PC-9 (cell line): ENCODE measurements at regions of chr6 and their contacts with region 1.

Region 1: DNA sequence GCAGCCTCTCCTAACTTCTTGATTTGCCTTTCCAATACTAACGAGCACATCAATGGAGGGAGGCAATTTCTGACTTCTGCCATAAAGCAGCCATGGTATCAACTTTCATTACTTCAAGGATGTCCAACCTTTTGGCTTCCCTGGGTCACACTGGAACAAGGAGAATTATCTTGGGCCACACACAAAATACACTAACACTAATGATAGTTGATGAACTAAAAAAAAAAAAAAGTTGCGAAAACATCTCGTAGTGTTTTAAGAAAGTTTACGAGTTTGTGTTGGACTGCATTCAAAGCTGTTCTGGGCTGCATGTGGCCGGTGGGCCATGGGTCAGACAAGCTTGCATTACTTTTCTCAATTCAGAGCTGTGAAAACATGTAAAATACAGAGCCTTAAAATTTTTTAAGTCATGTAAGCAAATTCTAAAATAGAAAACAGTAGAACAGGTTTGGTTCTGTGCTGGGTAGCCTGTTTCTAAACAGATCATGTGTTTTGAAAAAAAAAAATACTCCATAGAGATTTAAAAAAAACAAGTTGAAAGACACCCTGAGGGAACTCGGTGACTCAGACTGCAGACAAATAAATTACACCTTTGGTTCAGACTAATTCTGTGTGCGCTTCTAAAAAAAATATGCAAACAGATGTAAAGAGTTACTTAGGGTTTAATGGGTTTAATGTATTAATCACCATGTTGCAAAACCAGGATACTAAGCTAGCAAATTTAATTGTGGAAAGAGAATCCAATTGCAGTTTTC is 43.6 kb upstream of the SLC22A23 start:
- DNase-seq: peak; percentile 21 to 93
- H3K4me3 ChIP-seq: peak overlapping the region; percentile 41
- H3K27ac ChIP-seq: peak overlapping the region; percentile 43; the same call in 1 of the 2 replicates
- H3K4me1 ChIP-seq: peaks cover 25% of the 10 kb centered on the region
- H3K27me3 ChIP-seq: no peaks in the 10 kb centered on the region
- CTCF ChIP-seq: no peak

Region 2: DNA sequence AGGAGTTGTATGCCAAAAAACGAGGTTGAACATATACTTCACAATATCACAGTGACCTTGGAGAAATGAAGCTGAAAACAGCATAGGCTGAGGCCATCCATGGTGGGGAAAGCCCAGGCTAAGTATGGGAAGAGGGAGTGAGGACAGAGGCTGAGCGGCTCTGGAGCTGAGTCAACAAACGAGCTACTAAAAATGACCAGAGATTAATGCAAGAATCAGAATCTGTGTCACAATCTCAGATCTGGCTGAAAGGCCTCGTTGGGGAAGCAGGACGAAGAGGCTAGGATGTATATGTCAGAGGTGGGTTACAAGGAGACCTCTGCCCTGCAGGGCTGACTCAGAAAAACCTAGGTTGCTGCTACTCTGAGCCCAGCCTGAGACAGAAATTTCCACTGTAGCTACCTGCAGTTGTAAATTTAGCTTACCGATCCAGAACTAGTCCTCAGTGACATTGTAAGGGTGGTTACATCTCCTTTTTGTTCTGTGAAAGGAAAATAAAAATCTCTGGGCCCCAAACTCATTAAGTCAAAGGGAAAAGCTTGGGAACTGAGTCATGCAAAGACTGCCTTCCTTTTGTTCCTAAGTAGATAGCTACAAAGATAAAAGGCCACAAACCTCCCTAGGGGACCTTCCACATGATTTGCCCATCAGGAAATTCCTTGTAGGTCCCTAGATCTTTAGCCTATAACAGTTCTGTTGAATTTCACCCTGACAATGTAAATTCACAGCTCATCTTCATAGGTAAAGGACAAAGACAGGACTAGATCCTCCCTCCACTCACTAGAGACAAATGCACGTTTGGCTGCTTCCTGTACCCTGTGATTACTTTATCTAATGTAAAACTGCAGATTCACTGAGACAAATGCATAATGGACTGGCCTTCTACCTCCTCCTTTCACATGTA is 334.6 kb before region 1 on chr6:
- CTCF ChIA-PET with region 1: no interaction called
- POLR2A ChIA-PET with region 1: no interaction called
- intact Hi-C with region 1: no loop called
- DNase-seq: peak in 1 of 2 experiments; percentile 85
- H3K4me3 ChIP-seq: peak overlapping the region; percentile 8; the same call in 1 of the 2 replicates
- H3K27ac ChIP-seq: peak overlapping the region; percentile 88
- H3K4me1 ChIP-seq: peaks cover 45% of the 10 kb centered on the region
- H3K27me3 ChIP-seq: no peaks in the 10 kb centered on the region
- CTCF ChIP-seq: no peak

Region 3: DNA sequence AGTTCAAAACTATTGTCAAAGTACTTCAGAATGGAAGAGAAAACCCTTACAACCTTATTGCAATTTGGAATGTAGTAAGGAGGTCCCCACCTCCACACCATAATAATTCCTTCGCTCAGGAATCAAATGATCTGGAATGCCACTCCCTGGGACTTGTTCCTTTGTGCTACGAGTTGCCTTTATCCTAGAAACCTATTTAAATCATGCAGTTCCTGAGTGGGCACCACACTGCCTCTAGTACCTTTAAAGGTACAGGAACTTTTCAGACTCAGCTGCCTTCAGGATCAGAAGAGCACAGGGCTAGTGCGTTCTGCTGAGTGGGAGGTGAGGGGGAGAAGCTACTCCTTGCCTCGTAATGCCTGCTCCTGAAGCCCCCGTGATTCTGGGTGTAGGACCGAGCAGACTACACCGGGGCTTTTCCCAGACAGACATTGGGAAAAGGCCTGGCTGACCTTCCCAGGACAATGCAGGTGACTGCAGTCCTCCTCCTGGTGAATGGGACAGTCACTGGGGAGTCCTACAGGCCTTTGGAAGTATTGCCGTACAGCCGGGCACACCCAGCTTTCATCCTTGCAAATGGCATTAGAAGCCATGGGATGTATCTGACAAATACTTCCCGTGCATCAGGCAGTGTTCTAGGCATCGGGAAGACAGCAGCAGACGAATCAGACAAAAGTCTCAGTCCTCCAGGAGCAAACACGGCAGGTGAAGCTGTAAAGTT is 261.2 kb before region 1 on chr6:
- CTCF ChIA-PET with region 1: no interaction called
- POLR2A ChIA-PET with region 1: no interaction called
- intact Hi-C with region 1: no loop called
- DNase-seq: no peak
- H3K4me3 ChIP-seq: no peak overlapping the region
- H3K27ac ChIP-seq: no peak overlapping the region
- H3K4me1 ChIP-seq: no peaks in the 10 kb centered on the region
- H3K27me3 ChIP-seq: no peaks in the 10 kb centered on the region
- CTCF ChIP-seq: peak; percentile 37; the same call in 1 of the 2 replicates

Region 4: DNA sequence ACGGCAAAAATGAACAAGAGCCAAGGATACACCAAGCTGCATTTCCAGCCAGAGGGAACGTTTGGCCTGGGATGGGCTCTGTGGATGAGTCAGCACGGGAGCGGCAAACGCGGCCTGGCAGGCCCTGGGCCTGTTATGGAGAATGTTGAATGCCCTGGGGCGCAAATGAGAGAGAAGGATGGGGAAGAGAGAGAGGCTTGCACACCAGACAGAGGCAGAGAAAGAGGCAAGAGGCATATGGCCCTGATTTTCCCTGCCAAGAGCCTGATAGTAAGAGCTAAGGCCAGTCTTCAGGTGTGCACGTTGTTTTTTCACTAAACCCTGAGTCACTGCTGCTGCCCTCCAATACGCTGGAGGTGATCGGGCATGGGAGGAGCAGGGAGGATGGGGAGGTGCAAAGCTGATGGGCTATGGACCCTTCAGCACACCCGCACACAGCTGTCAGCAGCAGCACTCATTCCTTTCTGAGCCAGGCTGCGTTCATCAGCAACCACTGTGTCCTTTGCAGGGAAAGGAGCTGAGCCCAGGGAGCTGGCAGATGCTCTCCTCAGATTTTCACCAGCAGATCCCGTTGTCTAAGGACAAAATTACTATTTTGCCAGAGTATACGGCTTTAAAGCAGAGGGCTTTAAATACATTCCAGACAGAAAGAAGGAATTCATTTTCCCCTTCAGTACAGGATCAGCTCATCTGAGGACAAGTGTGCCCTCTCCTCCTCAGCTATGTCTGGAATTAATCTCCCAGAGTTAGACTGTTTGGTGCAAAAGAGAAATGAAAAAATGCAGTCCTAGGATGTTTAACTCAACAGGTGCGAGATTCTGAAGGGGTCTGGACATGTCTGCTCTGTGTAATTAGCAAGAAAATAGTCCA is 18.2 kb after region 1 on chr6:
- CTCF ChIA-PET with region 1: no interaction called
- POLR2A ChIA-PET with region 1: no interaction called
- intact Hi-C with region 1: loop called (anchors 2 kb)
- DNase-seq: peak; percentile 85 to 90
- H3K4me3 ChIP-seq: peak overlapping the region; percentile 31; the same call in 1 of the 2 replicates
- H3K27ac ChIP-seq: peak overlapping the region; percentile 71
- H3K4me1 ChIP-seq: peaks cover 52% of the 10 kb centered on the region
- H3K27me3 ChIP-seq: no peaks in the 10 kb centered on the region
- CTCF ChIP-seq: no peak

Region 5: GRCh38 chr6:3721810-3722626 is 221.6 kb after region 1 on chr6:
- CTCF ChIA-PET with region 1: no interaction called
- POLR2A ChIA-PET with region 1: no interaction called
- intact Hi-C with region 1: no loop called
- DNase-seq: no peak
- H3K4me3 ChIP-seq: no peak overlapping the region
- H3K27ac ChIP-seq: no peak overlapping the region
- H3K4me1 ChIP-seq: no peaks in the 10 kb centered on the region
- H3K27me3 ChIP-seq: no peaks in the 10 kb centered on the region
- CTCF ChIP-seq: no peak